ENCODE measurements at regions of chr1 and their contacts with region 1.

Region 1: DNA sequence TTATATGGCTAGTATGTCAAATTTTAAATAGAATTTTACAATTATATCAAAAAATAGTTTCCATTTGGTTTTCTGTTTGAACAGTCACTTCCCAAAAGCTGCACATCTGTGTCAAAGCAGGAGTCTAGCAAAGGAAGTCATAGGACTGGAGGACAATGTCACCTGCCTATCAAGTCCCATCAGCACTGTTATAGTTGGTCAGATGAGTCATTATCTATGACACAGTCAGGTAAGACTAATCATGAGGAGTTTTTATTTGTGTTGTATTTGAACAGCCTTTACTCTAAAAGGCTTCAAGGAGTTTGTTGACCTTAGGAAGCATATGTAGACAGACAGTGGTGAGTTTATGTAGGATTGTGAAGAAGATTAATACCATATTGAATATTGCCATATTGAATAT is 74.2 kb upstream of the QSOX1 start:
- DNase-seq: no peak
- ATAC-seq: peak; percentile 40 to 76 (median 68)
- H3K4me3 ChIP-seq: no peak overlapping the region
- H3K27ac ChIP-seq: peak overlapping the region; percentile 9
- H3K4me1 ChIP-seq: no peaks in the 10 kb centered on the region
- H3K27me3 ChIP-seq: no peaks in the 10 kb centered on the region
- CTCF ChIP-seq: no peak

Region 2: GRCh38 chr1:179917601-179918429 is 162.6 kb before region 1 on chr1:
- intact Hi-C with region 1: loop called in 1 of 2 experiments (anchors 10 kb)
- DNase-seq: no peak
- ATAC-seq: no peak
- H3K4me3 ChIP-seq: no peak overlapping the region
- H3K27ac ChIP-seq: no peak overlapping the region
- H3K4me1 ChIP-seq: peaks cover 7% of the 10 kb centered on the region
- H3K27me3 ChIP-seq: no peaks in the 10 kb centered on the region
- CTCF ChIP-seq: no peak

Region 3: DNA sequence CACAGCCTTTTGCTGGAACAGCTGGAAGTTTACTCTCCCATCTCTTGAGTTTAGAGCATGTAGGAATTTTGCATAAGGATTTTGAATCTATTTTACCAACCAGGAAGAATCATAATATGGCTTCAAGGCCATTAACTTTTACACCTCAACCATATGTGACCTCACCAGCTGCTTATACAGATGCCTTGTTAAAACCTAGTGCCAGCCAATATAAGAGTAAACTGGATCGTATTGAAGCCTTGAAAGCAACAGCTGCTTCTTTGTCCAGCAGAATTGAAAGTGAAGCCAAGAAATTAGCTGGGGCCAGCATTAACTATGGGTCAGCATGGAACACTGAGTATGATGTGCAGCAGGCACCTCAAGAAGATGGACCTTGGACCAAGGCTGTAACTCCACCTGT is 60.4 kb before region 1 on chr1:
- intact Hi-C with region 1: loop called (anchors 5 to 10 kb)
- DNase-seq: no peak
- ATAC-seq: no peak
- H3K4me3 ChIP-seq: no peak overlapping the region
- H3K27ac ChIP-seq: no peak overlapping the region
- H3K4me1 ChIP-seq: no peaks in the 10 kb centered on the region
- H3K27me3 ChIP-seq: no peaks in the 10 kb centered on the region
- CTCF ChIP-seq: no peak

Region 4: GRCh38 chr1:180092931-180093559 is 12.6 kb after region 1 on chr1:
- intact Hi-C with region 1: no loop called
- DNase-seq: no peak
- ATAC-seq: no peak
- H3K4me3 ChIP-seq: no peak overlapping the region
- H3K27ac ChIP-seq: no peak overlapping the region
- H3K4me1 ChIP-seq: no peaks in the 10 kb centered on the region
- H3K27me3 ChIP-seq: no peaks in the 10 kb centered on the region
- CTCF ChIP-seq: no peak

Measured in psoas muscle (tissue), 8 donors.